PC-3 (cell line): ENCODE measurements at regions of chr14 and their contacts with region 1.

Region 1: DNA sequence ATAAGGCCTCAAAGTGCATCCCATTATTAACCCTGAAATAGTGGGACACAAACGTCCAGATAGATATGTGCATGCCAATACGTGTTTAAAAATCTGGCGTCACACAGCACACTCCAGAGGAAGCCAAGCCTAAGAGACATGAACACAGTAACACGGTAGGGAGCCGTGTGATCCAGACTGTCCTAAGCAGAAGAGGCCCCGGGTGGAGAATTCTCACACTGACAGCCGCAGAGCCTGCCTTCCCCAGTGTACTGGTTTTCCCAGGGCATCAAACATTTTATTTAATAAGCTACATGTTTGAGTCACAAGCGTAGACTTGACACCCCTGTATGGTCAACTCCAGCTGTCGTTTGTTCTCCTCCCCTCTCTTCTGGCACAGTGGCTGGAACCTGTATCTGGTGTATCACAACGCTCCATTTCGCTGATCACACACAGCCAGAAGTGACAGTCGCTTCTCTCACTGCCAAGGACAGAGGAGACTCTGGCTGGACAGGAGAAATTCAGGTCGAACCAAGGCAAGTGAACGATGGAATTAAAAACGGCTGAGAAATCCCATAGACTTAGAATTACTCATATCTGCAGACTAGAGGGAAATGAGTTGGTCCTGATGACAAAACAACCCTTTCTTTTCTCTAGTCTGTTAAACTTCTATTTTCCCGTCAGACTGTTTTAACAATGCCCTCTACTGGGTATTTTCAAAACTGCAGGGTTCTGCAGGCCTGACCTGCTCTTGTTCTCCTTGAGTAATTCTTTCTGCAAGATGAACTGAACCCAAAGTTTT is 359.9 kb downstream of the RGS6 start:
- DNase-seq: peak; percentile 85
- ATAC-seq: peak; percentile 94
- H3K4me3 ChIP-seq: no peak overlapping the region
- H3K27ac ChIP-seq: no peak overlapping the region
- H3K4me1 ChIP-seq: no peaks in the 10 kb centered on the region
- H3K27me3 ChIP-seq: peaks cover 62% of the 10 kb centered on the region
- CTCF ChIP-seq: peak; percentile 90

Region 2: DNA sequence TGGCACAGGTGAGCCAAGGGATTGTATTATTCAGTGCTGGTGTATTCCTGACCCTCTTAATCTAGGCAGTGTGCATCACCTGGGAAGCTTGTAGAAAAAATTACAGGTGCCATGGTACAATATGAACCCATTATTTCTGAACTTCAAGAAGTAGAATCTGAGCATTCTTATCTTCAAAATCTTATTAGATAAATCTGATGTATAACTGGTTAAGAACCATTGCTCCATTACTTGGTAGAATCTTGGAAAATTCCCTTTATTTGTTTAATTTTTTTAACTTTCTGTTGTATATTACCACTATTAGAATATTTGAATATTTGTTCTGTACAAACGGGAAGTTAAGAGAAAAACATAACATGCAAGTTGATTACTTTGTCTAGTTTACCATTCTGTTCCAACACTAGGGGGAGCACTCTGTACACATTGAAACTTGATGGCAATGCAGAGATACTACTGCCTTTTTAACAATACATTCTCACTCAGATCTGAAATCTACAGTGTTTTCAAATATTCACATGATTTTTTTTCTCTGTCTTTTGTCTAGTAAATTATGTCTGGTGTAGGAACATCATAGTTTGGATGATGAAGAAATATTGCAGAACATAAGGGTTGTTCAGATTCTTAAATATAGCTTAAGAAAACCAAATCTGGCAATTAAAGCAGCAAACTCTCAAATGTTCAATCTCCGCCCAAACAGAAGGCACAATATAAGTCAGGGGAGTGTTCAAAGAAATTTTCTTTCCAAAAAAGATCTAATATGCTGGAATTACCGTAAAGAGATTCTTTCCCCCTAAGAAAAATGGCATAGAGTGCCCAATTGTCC is 1188.2 kb before region 1 on chr14:
- CTCF ChIA-PET with region 1: no interaction called
- POLR2A ChIA-PET with region 1: no interaction called
- intact Hi-C with region 1: loop called (anchors 5 kb)
- DNase-seq: peak; percentile 78
- ATAC-seq: peak; percentile 89
- H3K4me3 ChIP-seq: no peak overlapping the region
- H3K27ac ChIP-seq: no peak overlapping the region
- H3K4me1 ChIP-seq: peaks cover 7% of the 10 kb centered on the region; the same call in 1 of the 2 replicates
- H3K27me3 ChIP-seq: no peaks in the 10 kb centered on the region
- CTCF ChIP-seq: peak; percentile 96

Region 3: GRCh38 chr14:71932220-71932981 is 359.7 kb before region 1 on chr14 and contains the start of gene RGS6:
- CTCF ChIA-PET with region 1: no interaction called
- POLR2A ChIA-PET with region 1: no interaction called
- intact Hi-C with region 1: loop called (anchors 2 kb)
- DNase-seq: peak; percentile 72
- ATAC-seq: peak; percentile 95
- H3K4me3 ChIP-seq: peak within 1 kb of the TSS; percentile 36
- H3K27ac ChIP-seq: no peak within 1 kb of the TSS
- H3K4me1 ChIP-seq: peaks cover 5% of the 10 kb centered on the region; the same call in 1 of the 2 replicates
- H3K27me3 ChIP-seq: peaks cover 67% of the 10 kb centered on the region
- CTCF ChIP-seq: no peak; the same call in 1 of the 2 replicates
- total RNA-seq, gene RGS6: not detected in 2 replicates

Region 4: GRCh38 chr14:72420725-72421474 is 128.8 kb after region 1 on chr14:
- CTCF ChIA-PET with region 1: no interaction called
- POLR2A ChIA-PET with region 1: no interaction called
- intact Hi-C with region 1: no loop called
- DNase-seq: peak; percentile 89
- ATAC-seq: peak; percentile 62
- H3K4me3 ChIP-seq: no peak overlapping the region
- H3K27ac ChIP-seq: no peak overlapping the region
- H3K4me1 ChIP-seq: no peaks in the 10 kb centered on the region
- H3K27me3 ChIP-seq: peaks cover 55% of the 10 kb centered on the region
- CTCF ChIP-seq: peak; percentile 98